ENCODE measurements at regions of chr7 and their contacts with region 1.

Region 1: DNA sequence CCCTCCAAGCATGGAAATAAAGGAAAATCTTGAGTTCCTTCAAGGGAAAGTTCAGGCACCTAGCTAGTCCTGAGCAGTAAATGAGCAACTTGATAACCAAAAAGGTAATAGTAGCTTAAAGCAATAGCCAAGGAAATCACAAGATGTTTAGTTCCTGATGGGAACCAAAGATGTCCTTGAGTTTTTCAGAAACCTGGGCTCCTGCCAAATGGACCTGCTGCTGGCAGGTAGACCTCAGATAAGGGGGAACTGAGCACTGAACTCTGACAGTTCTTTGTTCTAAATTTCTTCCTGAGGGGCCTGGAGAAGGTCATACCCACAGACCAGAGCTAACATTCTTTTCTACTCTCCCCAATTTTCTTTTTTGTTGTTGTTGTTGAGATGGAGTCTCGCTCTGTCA is 48.5 kb downstream of the TMEM130 start:
- DNase-seq: no peak
- ATAC-seq: no peak
- H3K4me3 ChIP-seq: no peak overlapping the region
- H3K27ac ChIP-seq: peak overlapping the region; percentile 99
- H3K4me1 ChIP-seq: peaks cover 50 to 63% of the 10 kb centered on the region in 2 experiments
- H3K27me3 ChIP-seq: no peaks in the 10 kb centered on the region
- CTCF ChIP-seq: no peak
- POLR2A ChIP-seq: no peak
- RAD21 ChIP-seq: no peak

Region 2: DNA sequence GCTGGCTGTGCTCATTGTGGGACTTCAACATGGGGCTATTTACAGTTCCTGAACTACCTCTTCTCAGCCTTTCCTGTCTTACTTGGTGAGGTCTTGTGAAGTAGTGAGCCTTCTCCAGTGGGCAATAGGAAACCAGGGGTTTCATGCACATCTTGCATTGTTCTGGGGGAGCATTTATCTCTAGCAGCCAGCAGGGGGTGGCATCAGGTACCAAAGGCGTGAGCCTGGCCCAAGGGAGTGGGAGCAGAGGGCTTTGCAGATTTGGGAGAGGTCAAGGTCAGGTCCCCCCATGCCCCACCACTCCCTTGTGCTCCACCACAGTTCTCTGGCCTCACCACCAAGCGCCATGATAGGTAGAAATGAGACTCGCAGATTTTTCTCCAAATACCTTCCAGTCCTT is 289.6 kb before region 1 on chr7:
- CTCF ChIA-PET with region 1: no interaction called
- POLR2A ChIA-PET with region 1: no interaction called
- RAD21 ChIA-PET with region 1: no interaction called
- intact Hi-C with region 1: no loop called
- DNase-seq: no peak
- ATAC-seq: no peak
- H3K4me3 ChIP-seq: no peak overlapping the region
- H3K27ac ChIP-seq: no peak overlapping the region
- H3K4me1 ChIP-seq: no peaks in the 10 kb centered on the region
- H3K27me3 ChIP-seq: no peaks in the 10 kb centered on the region
- CTCF ChIP-seq: 0 out of 6 replicates have a peak, but pooled peaks of 2 of the 3 experiments have one; percentile 3 to 18
- POLR2A ChIP-seq: no peak
- RAD21 ChIP-seq: 0 out of 2 replicates have a peak, but pooled peaks have one; percentile 8

Region 3: DNA sequence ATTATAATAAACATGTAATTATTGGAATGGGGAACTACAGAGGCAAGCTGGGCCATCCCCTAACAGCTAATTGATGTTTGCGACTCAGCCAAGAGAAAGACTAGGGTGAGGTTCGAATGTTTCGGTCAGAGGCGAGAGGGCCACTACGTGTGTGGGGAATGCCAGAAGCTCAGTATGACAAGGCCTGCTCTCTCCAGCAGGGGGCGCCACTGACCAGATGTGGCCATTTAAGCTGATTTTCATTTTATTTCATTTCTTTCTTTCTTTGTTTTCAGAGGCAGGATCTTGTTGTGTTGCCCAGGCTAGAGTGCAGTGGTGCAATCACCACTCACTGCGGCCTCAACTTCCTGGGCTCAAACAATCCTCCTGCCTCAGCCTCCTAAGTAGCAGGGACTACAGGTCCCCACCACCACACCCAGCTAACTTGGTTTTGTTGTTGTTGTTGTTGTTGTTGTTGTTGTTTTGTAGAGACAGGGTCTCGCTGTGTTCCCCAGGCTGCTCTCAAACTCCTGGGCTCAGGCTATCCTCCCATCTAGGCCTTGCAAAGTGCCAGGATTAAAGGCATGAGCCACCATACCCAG is 10.4 kb after region 1 on chr7:
- CTCF ChIA-PET with region 1: interaction called, 45 read pairs
- POLR2A ChIA-PET with region 1: interaction called, 6 read pairs
- RAD21 ChIA-PET with region 1: no interaction called
- intact Hi-C with region 1: no loop called
- DNase-seq: no peak
- ATAC-seq: peak; percentile 73
- H3K4me3 ChIP-seq: no peak overlapping the region
- H3K27ac ChIP-seq: no peak overlapping the region
- H3K4me1 ChIP-seq: no peaks in the 10 kb centered on the region; a peak in 1 of 4 replicates
- H3K27me3 ChIP-seq: no peaks in the 10 kb centered on the region
- CTCF ChIP-seq: peak; percentile 14 to 87 (median 85); a peak in 4 of 6 replicates
- POLR2A ChIP-seq: no peak
- RAD21 ChIP-seq: peak; percentile 46